ENCODE measurements at regions of chr4 and their contacts with region 1.

Region 1: DNA sequence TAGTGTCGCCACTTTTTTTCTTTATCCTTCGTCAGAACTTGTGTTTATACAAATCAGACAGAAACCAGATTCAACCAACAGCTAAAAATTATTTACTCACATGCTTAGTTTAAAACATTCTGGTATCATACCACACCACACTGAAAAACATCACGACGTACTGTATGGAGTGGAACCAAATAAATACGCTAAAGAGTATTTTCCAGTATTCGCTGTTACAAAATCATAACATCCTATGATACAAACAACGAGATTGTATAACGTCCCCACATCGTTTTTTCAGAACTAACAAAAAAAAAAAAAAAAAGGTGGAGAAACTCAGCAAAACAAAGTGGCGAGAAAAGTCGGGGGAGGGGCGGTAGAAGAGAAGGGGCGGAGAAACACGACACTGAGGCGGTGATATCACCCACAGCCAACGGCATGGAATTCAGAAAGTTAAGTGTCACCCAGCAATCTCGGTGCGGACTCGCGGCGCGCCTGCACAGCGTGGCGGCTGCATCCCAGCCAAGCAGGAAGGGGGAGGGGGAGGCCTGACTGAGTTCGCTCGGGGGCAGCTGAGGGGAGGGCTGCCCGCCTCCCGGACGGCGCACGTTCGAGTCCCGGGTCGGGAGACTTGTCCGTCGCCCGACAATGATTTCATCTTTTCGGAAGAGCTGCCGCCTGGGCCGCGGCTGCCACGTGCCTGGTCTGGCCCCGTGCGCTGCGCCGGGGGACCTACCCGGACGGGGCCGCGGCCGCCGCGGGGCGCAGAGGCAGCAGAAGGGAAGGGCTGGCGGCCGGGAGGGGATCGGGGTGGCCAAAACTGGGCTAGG is 920 bp downstream of the SETD7 start:
- DNase-seq: peak; percentile 89 to 92
- ATAC-seq: peak; percentile 66

Region 2: GRCh38 chr4:139441029-139441428 is 114.1 kb before region 1 on chr4:
- intact Hi-C with region 1: no loop called
- DNase-seq: no peak
- ATAC-seq: no peak

Region 3: GRCh38 chr4:139453371-139454110 is 101.6 kb before region 1 on chr4:
- intact Hi-C with region 1: loop called in 1 of 2 experiments (anchors 10 kb)
- DNase-seq: peak; percentile 98 to 99
- ATAC-seq: peak; percentile 88

Region 4: GRCh38 chr4:140071806-140072205 is 516.7 kb after region 1 on chr4:
- intact Hi-C with region 1: no loop called
- DNase-seq: no peak
- ATAC-seq: peak; percentile 17